ENCODE measurements at regions of chr16 and their contacts with region 1.

Region 1: DNA sequence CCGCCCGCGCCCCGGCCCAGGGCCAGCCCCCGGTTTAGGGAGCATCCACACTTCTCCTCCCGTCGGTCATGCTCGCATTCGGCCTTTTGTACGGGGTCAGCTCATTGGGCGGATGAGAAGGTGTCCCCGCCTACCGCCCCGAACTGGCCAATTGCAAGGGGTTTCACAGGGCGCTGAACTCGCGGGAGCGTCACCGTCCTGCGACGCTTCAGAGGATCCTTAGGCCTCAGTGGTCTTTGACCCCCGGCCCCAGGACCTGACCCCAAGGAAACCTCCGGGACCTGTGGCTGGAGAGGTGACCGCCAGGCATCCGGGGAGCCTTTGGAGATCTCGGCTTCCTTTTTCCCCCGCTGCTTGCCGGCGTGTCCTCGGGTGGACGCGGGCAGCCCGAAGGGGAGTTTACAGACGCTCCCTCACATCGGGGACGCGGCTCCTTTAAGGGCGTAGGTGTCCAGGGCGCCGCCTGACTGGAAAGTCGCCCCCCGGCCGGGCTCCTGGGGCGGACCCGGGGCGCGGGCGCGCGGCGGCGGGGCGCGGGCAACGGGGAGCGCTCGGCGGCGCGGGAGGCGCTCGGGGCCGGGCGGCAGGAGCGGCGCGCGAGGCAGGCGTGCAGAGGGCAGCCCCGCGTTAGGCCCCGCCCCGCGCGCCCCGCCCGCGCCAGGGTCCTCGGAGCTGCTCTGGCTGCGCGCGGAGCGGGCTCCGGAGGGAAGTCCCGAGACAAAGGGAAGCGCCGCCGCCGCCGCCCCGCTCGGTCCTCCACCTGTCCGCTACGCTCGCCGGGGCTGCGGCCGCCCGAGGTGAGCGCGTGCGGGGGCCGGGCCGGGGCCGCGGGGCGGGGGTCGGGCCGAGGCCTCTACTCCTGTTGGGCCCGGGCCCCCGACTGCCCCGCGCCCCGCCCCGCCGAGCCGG is at the start of gene UBE2I:
- DNase-seq: peak; percentile 98
- ATAC-seq: peak; percentile 67
- H3K4me3 Mint-ChIP-seq: peak within 1 kb of the TSS; percentile 97
- H3K27ac Mint-ChIP-seq: peak within 1 kb of the TSS; percentile 99
- H3K4me1 Mint-ChIP-seq: peaks cover 47% of the 10 kb centered on the region
- H3K27me3 Mint-ChIP-seq: no peaks in the 10 kb centered on the region
- total RNA-seq, gene UBE2I: 251 to 358 TPM

Region 2: DNA sequence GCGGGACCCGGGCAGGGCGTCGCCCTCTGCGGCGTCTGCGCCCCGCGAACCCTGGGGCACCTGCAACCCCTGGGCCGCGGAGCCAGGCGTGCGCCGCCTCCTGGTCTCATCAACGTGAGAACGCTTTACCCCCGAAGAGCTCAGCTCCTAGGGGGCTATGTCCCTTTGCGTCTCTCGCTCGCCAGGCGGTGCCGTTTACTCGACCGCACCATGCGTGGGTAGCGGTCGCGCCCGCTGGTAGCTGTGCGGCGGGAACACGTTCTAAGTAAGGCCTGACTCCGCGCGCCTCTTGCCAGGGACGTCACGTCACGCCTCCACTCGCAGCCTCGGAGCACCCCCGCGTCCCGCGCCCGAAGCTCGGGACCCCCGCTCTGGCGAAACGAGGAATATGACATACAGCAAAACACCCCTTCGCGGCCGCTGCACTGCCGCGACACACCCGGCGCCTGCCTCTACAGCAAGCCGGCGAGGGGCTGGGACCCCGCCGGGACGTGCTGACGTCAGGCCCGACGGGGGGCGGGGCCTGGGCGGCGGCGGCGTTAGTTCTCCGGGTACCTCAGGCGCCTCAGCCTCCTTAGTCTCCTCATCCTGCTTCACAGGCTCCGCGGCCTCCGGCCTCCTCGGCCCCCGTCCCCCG is 884.0 kb before region 1 on chr16 and contains the start of gene RAB11FIP3:
- CTCF ChIA-PET with region 1: no interaction called
- POLR2A ChIA-PET with region 1: no interaction called
- intact Hi-C with region 1: loop called in 1 of 2 experiments (anchors 10 kb)
- DNase-seq: peak; percentile 90
- ATAC-seq: peak; percentile 93
- H3K4me3 Mint-ChIP-seq: peak within 1 kb of the TSS; percentile 74
- H3K27ac Mint-ChIP-seq: peak within 1 kb of the TSS; percentile 47
- H3K4me1 Mint-ChIP-seq: peaks cover 30% of the 10 kb centered on the region
- H3K27me3 Mint-ChIP-seq: peaks cover 5% of the 10 kb centered on the region
- total RNA-seq, gene RAB11FIP3: 14.2 to 17.0 TPM

Region 3: GRCh38 chr16:733382-734207 is 575.6 kb before region 1 on chr16:
- CTCF ChIA-PET with region 1: no interaction called
- POLR2A ChIA-PET with region 1: no interaction called
- intact Hi-C with region 1: loop called in 1 of 2 experiments (anchors 5 kb)
- DNase-seq: peak; percentile 57
- ATAC-seq: no peak
- H3K4me3 Mint-ChIP-seq: no peak overlapping the region
- H3K27ac Mint-ChIP-seq: no peak overlapping the region
- H3K4me1 Mint-ChIP-seq: peaks cover 20% of the 10 kb centered on the region
- H3K27me3 Mint-ChIP-seq: no peaks in the 10 kb centered on the region

Region 4: GRCh38 chr16:1351582-1352362 is 42.5 kb after region 1 on chr16 and contains the starts of genes GNPTG and TSR3:
- CTCF ChIA-PET with region 1: no interaction called
- POLR2A ChIA-PET with region 1: no interaction called
- intact Hi-C with region 1: loop called in 1 of 2 experiments (anchors 1 kb)
- DNase-seq: peak; percentile 91
- ATAC-seq: peak; percentile 87
- H3K4me3 Mint-ChIP-seq: peak within 1 kb of the TSS; percentile 85
- H3K27ac Mint-ChIP-seq: peak within 1 kb of the TSS; percentile 79
- H3K4me1 Mint-ChIP-seq: peaks cover 37% of the 10 kb centered on the region
- H3K27me3 Mint-ChIP-seq: no peaks in the 10 kb centered on the region
- total RNA-seq, gene GNPTG: 16.3 to 17.4 TPM
- total RNA-seq, gene TSR3: 37.6 to 58.7 TPM

Region 5: DNA sequence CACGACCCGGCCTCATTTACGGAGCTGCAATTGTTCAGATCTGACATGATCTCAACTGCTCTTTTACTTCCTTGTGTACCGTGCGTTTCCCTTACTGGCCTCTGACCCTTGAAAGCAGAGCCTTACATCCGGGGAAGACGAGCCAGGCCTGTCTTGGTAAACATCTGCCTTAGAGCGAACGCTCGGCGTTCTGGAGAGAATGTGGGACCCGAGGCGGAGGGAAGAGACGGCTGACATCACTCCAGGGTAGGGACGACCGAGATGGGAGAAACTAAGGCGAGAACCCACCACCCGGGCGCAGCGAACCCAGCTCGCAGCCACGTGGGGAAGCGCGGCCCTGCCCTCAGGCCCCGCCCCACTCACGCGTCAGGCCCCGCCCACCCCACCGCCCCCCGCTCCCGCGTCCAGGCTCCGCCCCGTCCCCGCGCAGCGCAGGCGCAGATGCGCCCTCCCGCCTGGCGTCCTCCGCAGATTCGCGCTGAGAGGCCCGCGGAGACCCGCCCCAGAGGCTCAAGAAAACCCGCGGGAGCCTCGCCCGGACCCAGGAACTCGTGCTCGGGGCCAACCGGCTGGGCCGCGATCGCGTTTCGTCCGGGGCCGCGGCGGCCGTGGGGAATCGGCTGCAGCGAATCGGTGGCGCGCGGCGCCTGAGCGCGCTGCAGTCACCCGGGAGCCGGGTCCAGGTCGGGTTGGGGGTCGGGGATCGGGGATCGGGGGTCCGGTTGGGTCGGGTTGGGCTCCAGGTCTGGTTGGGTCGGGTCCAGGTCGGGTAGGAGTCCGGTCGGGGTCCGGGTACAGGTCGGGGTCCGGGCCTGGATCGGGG is 183.9 kb after region 1 on chr16 and contains the start of gene TELO2:
- CTCF ChIA-PET with region 1: no interaction called
- POLR2A ChIA-PET with region 1: no interaction called
- intact Hi-C with region 1: loop called in 1 of 2 experiments (anchors 1 kb)
- DNase-seq: peak; percentile 94
- ATAC-seq: peak; percentile 89
- H3K4me3 Mint-ChIP-seq: peak within 1 kb of the TSS; percentile 92
- H3K27ac Mint-ChIP-seq: peak within 1 kb of the TSS; percentile 97
- H3K4me1 Mint-ChIP-seq: peaks cover 15% of the 10 kb centered on the region
- H3K27me3 Mint-ChIP-seq: no peaks in the 10 kb centered on the region
- total RNA-seq, gene TELO2: 48.1 to 60.0 TPM

Region 6: DNA sequence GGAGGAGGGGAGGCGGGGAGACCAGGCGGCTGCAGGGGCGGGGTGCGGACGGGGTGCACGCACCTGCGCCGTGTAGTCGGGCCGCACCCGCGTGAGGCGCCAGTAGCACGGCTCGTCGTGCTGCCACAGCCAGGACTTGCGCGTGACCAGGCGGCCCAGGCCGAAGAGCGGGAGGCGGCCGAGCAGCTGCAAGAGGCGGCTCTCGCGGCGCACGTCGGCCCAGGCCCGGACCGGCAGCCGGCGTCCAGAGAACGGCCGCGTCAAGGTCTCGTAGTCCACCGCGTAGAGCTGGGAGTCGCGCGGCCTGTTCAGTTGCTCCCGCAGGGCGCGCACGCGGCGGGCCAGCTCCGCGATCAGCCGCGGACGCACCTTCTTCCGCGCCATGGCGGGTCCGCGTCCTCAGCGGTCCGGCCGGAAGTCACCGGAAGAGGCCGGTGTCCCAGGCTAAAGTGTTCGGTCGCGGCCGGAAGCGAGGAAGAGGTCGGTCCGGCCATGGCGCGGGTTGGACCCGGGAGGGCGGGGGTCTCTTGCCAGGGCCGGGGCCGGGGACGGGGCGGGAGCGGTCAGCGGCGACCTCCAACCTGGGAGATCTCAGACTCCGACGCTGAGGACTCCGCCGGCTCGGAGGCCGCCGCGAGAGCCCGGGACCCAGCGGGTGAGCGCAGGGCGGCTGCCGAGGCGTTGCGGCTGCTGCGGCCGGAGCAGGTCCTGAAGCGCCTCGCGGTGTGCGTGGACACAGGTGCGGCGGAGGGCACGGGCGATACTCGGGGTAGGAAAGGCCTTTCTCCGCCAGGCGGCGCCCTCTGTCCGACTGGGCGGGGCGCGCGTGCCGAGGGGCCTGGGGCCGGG is 463.7 kb after region 1 on chr16 and contains the starts of genes EME2 and MRPS34:
- CTCF ChIA-PET with region 1: no interaction called
- POLR2A ChIA-PET with region 1: no interaction called
- intact Hi-C with region 1: loop called in 1 of 2 experiments (anchors 1 kb)
- DNase-seq: peak; percentile 90
- ATAC-seq: peak; percentile 53
- H3K4me3 Mint-ChIP-seq: peak within 1 kb of the TSS; percentile 94
- H3K27ac Mint-ChIP-seq: peak within 1 kb of the TSS; percentile 99
- H3K4me1 Mint-ChIP-seq: peaks cover 9% of the 10 kb centered on the region
- H3K27me3 Mint-ChIP-seq: no peaks in the 10 kb centered on the region
- total RNA-seq, gene EME2: 13.1 to 18.4 TPM
- total RNA-seq, gene MRPS34: 146 to 175 TPM

Measured in activated CD4-positive, alpha-beta T cell treated with anti-CD3 and anti-CD28 coated beads for 36 hours (primary cell).